IMR-90 (cell line): ENCODE measurements at regions of chr2 and their contacts with region 1.

Region 1: GRCh38 chr2:86079981-86080911 is 25.4 kb downstream of the POLR1A start:
- DNase-seq: peak; percentile 67
- ATAC-seq: peak; percentile 93
- H3K4me3 ChIP-seq: no peak overlapping the region
- H3K27ac ChIP-seq: no peak overlapping the region
- H3K4me1 ChIP-seq: no peaks in the 10 kb centered on the region
- H3K27me3 ChIP-seq: no peaks in the 10 kb centered on the region
- CTCF ChIP-seq: peak; percentile 75
- POLR2A ChIP-seq: no peak
- RAD21 ChIP-seq: peak; percentile 84

Region 2: GRCh38 chr2:85723707-85724360 is 356.4 kb before region 1 on chr2:
- CTCF ChIA-PET with region 1: no interaction called
- POLR2A ChIA-PET with region 1: no interaction called
- dilution Hi-C with region 1: no loop called
- in situ Hi-C with region 1: loop called (anchors 5 kb)
- intact Hi-C with region 1: loop called (anchors 1 kb)
- DNase-seq: peak; percentile 50
- ATAC-seq: peak; percentile 81
- H3K4me3 ChIP-seq: no peak overlapping the region
- H3K27ac ChIP-seq: no peak overlapping the region
- H3K4me1 ChIP-seq: peaks cover 5% of the 10 kb centered on the region
- H3K27me3 ChIP-seq: peaks cover 7% of the 10 kb centered on the region; the same call in 1 of the 2 replicates
- CTCF ChIP-seq: no peak
- POLR2A ChIP-seq: no peak
- RAD21 ChIP-seq: no peak

Region 3: DNA sequence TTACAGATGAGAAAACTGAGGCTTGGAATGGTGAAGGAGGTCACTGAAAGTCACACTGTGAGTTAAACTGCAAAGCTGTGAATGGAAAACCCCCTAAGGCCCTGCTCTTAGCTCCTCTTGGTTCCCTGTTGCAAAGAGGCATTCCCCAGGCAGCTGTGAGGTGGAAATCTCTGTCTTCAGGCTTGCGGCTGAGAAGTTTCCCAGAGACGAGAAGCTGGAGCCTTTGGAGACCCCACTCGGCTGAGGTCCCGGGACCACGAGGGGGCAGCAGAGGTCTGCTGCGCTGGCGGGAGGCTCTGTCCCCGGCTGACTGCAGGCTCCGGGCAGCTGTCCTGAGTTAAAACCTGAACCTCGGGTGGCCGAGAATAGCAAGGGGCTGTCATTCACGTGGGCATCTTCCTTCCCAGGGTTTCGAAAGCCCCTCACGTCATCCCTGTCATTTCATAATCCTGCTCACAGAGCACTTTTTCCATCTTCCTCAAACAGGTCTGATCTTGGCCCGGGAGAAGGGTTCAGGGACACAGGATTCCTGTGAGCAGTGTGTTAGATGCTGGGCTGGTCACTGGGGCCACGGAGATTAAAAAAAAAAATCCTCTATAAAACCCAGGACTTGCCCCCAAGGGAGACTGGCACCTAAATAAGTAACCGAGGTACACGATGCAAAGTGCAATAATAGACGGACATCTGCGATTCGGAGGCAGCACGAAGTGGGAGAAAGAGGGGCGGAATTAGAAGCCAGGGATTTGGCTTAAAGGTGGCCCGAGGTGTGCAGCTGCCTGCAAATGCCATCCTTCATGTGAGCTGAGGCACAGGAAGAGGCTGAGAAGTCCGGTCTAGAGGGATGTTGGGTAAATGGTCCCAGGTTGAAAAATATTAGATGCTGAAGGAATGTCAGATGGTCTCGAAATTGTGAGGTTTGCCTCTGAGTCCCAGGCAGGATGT is 351.1 kb before region 1 on chr2:
- CTCF ChIA-PET with region 1: no interaction called
- POLR2A ChIA-PET with region 1: no interaction called
- dilution Hi-C with region 1: no loop called
- in situ Hi-C with region 1: loop called (anchors 5 kb)
- intact Hi-C with region 1: loop called (anchors 1 kb)
- DNase-seq: peak; percentile 72
- ATAC-seq: peak; percentile 98
- H3K4me3 ChIP-seq: no peak overlapping the region
- H3K27ac ChIP-seq: no peak overlapping the region
- H3K4me1 ChIP-seq: peaks cover 5% of the 10 kb centered on the region
- H3K27me3 ChIP-seq: no peaks in the 10 kb centered on the region
- CTCF ChIP-seq: peak; percentile 99
- POLR2A ChIP-seq: peak; percentile 43; the same call in 1 of the 2 replicates
- RAD21 ChIP-seq: peak; percentile 100

Region 4: DNA sequence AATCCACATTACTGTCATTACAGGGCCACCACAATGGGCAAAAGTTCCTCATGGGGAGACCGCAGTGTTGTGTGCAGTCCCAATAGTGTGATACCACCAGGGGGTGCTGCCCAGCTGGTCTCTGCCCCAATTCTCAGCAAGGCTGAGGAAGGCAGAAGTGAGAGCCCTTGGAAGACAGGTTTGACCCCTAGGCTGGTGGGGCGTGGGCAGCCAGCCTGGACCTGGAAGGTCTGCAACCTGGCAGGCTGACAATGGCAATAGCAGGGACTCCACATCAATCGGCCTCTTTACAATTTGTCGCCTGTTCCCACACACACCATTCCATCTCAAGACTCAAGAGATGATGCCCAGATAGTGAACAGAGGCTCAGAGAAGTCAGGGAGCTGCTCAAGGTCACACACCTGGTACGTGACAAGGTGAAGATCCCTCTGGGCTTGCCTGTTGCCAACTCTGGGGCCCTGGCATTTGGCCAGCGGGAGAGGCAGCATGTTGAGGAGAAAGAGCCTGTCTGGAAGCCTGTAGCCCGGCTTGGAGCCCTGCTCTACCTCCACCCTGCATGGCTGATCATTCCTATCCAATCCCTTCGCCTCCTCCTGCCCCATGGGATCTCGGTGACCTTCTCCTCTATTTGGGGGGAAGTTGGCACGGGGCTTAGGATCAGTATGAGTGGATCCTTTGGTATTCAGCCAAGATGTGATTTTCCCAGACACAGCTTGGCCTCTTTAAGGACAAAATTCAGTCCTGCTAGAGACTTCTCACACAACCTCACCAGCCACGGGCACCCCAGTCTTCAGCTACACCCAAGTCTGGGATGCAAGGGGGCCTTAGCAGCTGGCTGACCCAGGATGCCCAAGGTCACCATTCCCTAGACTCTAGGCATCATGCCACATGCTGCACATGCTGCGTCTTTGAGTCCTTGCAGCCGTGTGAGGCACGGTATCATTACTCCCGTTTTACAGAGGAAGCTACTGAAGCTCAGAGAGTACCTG is 329.4 kb before region 1 on chr2:
- CTCF ChIA-PET with region 1: interaction called, 3 read pairs
- POLR2A ChIA-PET with region 1: no interaction called
- dilution Hi-C with region 1: no loop called
- in situ Hi-C with region 1: no loop called
- intact Hi-C with region 1: loop called (anchors 10 kb)
- DNase-seq: peak; percentile 58
- ATAC-seq: peak; percentile 51
- H3K4me3 ChIP-seq: no peak overlapping the region
- H3K27ac ChIP-seq: no peak overlapping the region
- H3K4me1 ChIP-seq: peaks cover 14% of the 10 kb centered on the region
- H3K27me3 ChIP-seq: no peaks in the 10 kb centered on the region; the same call in 1 of the 2 replicates
- CTCF ChIP-seq: peak; percentile 81
- POLR2A ChIP-seq: no peak
- RAD21 ChIP-seq: peak; percentile 84

Region 5: DNA sequence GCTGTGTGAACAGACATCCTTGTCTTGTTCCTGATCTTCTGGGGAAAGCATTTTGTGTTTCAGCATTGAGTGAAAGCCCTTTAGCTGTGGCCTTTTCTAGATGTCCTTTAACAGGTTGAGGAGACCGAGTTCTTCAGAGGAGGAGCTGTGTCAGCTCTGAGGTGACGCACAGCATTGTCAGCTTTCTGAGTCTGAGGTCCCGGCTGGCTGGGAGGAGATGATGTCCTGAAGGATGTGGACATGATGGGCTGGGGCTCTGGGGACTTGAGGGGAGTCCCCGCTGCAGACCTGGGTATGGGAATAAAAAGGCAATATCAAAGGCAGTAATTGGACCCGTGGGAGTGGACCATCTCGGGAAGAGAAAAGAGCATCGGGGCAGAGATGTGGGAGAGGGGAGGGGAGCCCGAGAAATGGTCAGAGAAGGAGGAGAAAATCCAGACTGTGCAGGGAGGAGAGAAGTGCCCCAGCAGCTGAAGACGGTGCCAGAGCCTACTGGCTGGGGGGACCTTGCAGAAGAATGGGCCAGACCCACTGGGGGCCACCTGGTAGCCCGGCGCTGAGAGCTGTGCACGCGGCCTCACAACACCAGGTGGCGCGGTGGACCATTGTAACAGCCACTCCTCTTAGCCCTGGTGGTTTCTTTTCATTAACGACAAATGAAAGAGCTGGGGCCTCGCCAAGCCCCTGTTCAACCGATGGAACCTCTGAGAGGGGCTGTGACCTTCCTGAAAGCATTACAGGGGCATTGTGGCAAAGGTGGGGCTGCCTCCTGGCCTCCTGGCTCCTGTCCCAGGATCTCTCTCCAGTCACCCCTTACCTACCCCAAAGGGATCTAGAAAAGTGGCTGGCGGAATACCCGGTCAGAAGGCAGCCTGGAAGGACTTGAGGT is 253.0 kb before region 1 on chr2:
- CTCF ChIA-PET with region 1: interaction called, 91 read pairs
- POLR2A ChIA-PET with region 1: no interaction called
- dilution Hi-C with region 1: no loop called
- in situ Hi-C with region 1: loop called (anchors 5 kb)
- intact Hi-C with region 1: loop called (anchors 1 kb)
- DNase-seq: peak; percentile 49
- ATAC-seq: peak; percentile 100
- H3K4me3 ChIP-seq: no peak overlapping the region
- H3K27ac ChIP-seq: no peak overlapping the region
- H3K4me1 ChIP-seq: no peaks in the 10 kb centered on the region
- H3K27me3 ChIP-seq: peaks cover 9% of the 10 kb centered on the region
- CTCF ChIP-seq: peak; percentile 92
- POLR2A ChIP-seq: 0 out of 2 replicates have a peak, but pooled peaks have one; percentile 36
- RAD21 ChIP-seq: peak; percentile 94

Region 6: DNA sequence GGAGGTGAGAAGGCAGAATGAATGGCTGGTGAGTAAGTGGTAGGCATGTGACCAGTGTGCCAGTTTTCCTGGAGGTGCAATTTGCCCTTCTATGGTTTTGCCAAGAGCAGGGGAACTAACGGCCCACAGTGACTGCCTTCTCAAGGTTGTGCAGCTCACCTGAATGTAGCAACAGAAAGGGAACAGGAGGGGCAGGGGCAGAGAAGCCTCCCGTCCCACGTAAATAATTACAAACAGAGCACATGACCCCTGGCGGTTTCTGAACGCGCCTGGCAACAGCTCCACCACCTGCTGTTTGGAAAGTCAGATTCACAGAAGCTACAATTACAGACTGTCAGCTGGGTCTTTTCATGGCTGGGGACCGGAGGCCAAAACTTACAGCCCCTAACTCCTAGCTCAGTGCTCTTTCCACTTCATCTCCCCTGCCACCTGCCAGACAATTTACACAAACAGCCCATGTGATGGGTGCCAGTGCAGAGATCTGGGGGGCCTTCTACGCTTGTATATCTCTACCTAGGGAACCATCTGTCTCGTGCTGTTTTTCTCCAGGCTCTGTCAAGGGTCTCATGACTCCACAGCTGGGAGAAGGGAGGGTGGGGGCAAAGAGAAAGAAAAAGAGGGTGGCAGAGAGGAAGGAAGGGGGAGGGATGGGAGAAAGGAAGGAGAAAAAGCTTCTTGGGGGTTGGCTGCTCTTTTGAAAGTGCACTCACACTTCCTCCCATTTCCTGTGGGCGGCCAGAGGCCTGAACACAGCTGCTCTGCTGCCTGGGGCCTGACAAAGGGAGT is 44.2 kb before region 1 on chr2:
- CTCF ChIA-PET with region 1: interaction called, 3 read pairs
- POLR2A ChIA-PET with region 1: no interaction called
- dilution Hi-C with region 1: no loop called
- in situ Hi-C with region 1: no loop called
- intact Hi-C with region 1: loop called (anchors 5 kb)
- DNase-seq: peak; percentile 86
- ATAC-seq: peak; percentile 83
- H3K4me3 ChIP-seq: no peak overlapping the region
- H3K27ac ChIP-seq: peak overlapping the region; percentile 83
- H3K4me1 ChIP-seq: peaks cover 29% of the 10 kb centered on the region
- H3K27me3 ChIP-seq: no peaks in the 10 kb centered on the region
- CTCF ChIP-seq: peak; percentile 36
- POLR2A ChIP-seq: no peak
- RAD21 ChIP-seq: peak; percentile 45